ENCODE measurements at regions of chr17 and their contacts with region 1.

Region 1: DNA sequence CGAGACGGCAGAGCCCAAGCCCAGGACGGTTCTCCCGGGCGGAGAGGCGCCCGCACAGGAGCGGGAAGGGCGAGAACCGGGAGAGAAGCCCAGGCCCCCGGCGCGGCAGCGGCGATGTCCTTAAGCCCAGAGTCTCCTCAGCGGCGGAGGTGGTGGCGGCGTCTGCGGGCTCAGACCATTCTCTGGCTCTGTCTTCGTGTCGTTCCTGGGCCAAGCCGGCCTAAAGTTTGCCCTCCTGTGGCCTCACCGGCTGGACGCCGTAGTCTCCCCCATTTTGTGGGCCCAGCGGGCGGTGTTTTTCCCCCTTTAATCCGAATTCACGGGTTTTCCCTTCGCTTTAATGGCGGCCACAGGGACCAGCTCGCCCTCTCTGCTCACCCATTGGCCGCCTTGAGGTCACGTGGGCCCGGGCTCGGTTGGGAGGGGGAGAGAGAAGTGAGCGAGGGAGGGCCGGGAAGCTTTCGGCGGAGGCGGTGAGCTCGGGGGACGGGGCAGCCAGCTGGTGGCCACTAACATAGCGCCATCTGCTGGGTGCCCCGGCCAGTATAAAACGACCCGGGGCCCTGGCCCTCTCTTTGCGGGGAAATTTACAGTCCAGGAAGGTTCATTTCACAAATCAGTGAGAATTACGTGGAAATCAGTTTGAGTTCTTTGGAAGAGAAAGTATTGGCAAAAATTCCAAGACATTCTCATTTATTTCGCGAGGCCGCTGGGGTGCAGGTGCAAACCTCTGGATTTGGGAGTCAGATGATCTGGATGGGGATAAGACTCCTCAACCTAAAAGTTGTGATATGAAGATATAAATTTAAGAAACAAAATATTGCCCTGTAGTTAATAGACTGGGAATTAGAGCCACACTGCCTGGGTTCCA is 755 bp upstream of the MED13 start:
- DNase-seq: peak; percentile 100
- H3K4me3 ChIP-seq: peak overlapping the region; percentile 75 to 99 (median 92)
- H3K27ac ChIP-seq: peak overlapping the region; percentile 96 to 100 (median 99)
- H3K4me1 ChIP-seq: peaks cover 27 to 46% (median 40%) of the 10 kb centered on the region in 6 donors
- H3K27me3 ChIP-seq: no peaks in the 10 kb centered on the region
- CTCF ChIP-seq: peak; percentile 78 to 97 (median 93)
- POLR2A ChIP-seq: peak in 1 of 3 donors; percentile 41

Region 2: GRCh38 chr17:61897303-61898200 is 168.3 kb before region 1 on chr17:
- intact Hi-C with region 1: no loop called
- DNase-seq: no peak
- H3K4me3 ChIP-seq: no peak overlapping the region
- H3K27ac ChIP-seq: no peak overlapping the region
- H3K4me1 ChIP-seq: no peaks in the 10 kb centered on the region
- H3K27me3 ChIP-seq: no peaks in the 10 kb centered on the region
- CTCF ChIP-seq: no peak
- POLR2A ChIP-seq: no peak

Region 3: GRCh38 chr17:61927200-61928165 is 138.3 kb before region 1 on chr17 and contains the start of gene INTS2:
- intact Hi-C with region 1: loop called (anchors 10 kb)
- DNase-seq: peak; percentile 98
- H3K4me3 ChIP-seq: peak within 1 kb of the TSS; percentile 72 to 89 (median 84)
- H3K27ac ChIP-seq: peak within 1 kb of the TSS; percentile 79 to 90 (median 88)
- H3K4me1 ChIP-seq: peaks cover 9 to 27% (median 21%) of the 10 kb centered on the region in 6 donors
- H3K27me3 ChIP-seq: peaks cover 0 to 4% (median 0%) of the 10 kb centered on the region in 7 donors
- CTCF ChIP-seq: peak in 2 of 11 experiments; percentile 16
- POLR2A ChIP-seq: peak in 2 of 3 donors; percentile 28 to 72
- total RNA-seq, gene INTS2: 13.8 to 20.0 (median 16.2) TPM

Measured in spleen (tissue), 13 donors.